Activated CD8-positive, alpha-beta memory T cell treated with anti-CD3 and anti-CD28 coated beads, Interleukin-2, amount 10 ng/mL, durations not matched to agents 7 days and 5 days (primary cell): ENCODE measurements at regions of chr20 and their contacts with region 1.

Region 1: DNA sequence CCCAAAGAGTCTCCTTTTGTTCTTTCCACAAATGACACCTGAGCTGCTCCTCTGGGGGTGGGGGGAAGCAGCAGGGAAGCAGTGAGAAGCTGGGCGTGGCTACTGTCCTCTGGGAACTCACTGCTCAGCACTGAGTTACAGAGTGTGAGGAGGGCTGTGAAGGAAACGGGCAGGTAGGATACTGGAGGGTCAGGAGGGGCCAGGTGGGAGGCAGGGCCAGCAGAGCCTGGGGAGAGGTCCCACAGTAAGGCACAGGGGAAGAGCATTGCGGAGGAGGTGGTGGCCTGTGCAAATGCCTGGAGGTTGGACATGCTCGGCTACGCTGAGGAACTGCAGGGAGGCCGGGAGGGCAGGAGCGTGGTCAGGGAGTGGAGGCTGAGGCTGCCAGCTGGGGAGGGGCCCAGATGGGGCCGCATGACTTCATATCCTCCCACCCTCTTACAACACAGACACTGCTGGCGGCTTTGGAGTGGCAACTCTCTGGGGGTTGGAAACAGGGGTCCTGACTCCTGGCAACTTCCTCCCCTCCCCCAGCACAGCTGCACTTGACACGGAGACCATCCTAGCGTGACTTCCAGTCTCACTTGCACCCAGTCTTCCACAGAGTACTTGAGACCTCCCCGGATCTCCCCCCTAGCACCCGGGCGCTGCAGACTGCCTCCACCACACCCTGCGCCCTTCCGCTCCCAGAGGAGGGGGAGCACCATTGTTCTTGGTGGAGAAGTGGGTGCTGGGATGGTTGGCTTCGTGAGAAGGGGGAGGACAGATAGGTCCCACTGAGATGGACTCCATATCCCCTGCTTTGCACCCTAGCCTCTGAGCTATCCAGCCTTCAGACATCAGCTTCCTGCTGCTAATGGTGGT is 34.2 kb downstream of the RBM38 start:
- DNase-seq: no peak
- ATAC-seq: no peak
- H3K4me3 Mint-ChIP-seq: no peak overlapping the region
- H3K27ac Mint-ChIP-seq: no peak overlapping the region
- H3K4me1 Mint-ChIP-seq: peaks cover 13% of the 10 kb centered on the region
- H3K27me3 Mint-ChIP-seq: peaks cover 4% of the 10 kb centered on the region

Region 2: DNA sequence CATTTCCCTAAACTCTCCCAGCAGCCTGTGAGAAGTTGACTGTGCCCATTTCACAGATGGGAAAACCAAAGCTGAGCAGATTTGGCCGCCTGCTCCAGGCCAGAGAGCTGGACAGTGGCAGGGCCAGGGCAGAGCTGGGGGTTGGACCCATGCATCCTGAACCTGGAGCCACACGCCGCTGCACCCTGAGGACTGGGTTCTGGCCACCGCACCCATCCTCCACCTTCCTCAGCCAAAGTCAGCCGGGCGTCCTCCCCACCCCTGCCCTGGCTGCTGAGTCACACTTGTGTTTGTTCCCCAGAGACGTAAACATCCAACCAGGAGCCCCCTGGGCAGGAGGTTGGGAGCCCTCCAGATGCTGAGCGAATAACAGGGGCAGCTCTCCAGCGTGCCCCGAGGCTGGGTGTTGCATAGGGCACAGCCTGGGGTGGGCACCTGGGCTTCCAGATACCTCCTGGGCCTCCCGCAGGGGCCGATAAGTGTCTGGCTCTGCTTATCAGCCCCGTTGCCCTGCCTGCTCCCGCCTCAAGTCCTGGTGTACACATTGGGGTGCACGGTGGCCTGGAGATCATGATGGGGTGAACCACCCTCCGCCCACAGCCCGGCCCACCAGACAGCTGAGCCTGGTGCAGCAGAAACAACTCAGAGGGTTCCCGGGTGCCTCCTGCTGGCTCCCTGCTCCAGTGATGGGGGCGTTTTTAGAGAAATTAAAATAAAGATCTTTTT is 10.4 kb before region 1 on chr20:
- CTCF ChIA-PET with region 1: interaction called, 10 read pairs
- DNase-seq: no peak
- ATAC-seq: no peak
- H3K4me3 Mint-ChIP-seq: no peak overlapping the region
- H3K27ac Mint-ChIP-seq: no peak overlapping the region
- H3K4me1 Mint-ChIP-seq: peaks cover 25% of the 10 kb centered on the region
- H3K27me3 Mint-ChIP-seq: peaks cover 13% of the 10 kb centered on the region